Psoas muscle (tissue), 8 donors: ENCODE measurements at regions of chr18 and their contacts with region 1.

Region 1: DNA sequence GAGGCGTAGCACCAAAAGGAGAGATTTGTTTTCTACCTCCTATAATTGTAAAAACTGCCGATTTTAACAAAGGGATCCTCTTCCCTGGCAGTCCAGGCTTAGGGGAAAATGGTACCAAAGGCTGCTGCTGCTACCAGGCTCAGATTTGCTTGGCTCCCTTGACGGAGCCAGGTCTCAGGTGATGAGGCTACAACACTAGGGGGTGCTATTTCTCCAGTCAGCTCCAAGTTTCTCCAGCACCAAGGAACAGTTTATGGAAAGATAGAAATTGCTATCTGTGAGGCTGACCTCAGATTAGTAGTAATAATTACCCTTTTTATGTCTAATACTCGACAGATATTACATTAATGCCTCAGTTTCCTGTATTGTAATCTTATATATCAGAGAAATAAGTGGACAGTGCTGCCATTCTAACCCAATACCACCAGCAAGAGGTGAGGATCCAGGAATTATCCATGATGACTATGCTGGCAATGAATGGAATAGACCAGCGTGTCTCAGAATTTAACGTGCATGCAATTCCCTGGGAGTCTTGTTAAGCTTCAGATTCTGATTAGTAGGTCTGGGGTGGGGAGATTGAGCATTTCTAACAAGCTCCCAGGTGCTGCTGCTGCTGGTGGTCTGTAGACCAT is 111.3 kb downstream of the ESCO1 start:
- DNase-seq: no peak
- ATAC-seq: peak; percentile 48 to 78 (median 69)
- H3K4me3 ChIP-seq: no peak overlapping the region
- H3K27ac ChIP-seq: peak overlapping the region; percentile 89
- H3K4me1 ChIP-seq: peaks cover 20% of the 10 kb centered on the region
- H3K27me3 ChIP-seq: no peaks in the 10 kb centered on the region
- CTCF ChIP-seq: peak; percentile 74

Region 2: DNA sequence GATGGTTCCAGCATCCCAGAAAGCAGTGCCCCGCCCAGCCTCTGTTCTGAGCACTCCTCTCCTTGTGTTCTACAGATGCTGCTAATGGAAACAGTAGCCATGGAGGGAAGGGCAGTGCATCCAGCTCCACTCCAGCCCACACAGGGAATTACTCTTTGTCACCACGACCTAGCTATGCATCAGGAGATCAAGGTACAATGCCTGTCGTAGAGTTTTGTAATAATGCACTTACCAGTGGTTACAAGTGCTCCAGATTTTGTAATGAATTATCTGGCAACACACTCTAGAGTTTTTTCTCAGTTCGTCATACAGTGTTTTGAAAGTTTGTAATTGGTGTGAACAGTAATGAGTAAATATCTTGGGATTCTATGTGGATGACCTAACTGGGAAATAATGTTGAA is 49.8 kb before region 1 on chr18:
- intact Hi-C with region 1: no loop called
- DNase-seq: no peak
- ATAC-seq: peak in 2 of 4 donors; percentile 32 to 39
- H3K4me3 ChIP-seq: no peak overlapping the region
- H3K27ac ChIP-seq: no peak overlapping the region
- H3K4me1 ChIP-seq: peaks cover 39% of the 10 kb centered on the region
- H3K27me3 ChIP-seq: no peaks in the 10 kb centered on the region
- CTCF ChIP-seq: no peak

Region 3: GRCh38 chr18:21452796-21453510 is 36.3 kb before region 1 on chr18:
- intact Hi-C with region 1: loop called in 1 of 2 experiments (anchors 2 kb)
- DNase-seq: no peak
- ATAC-seq: peak in 1 of 4 donors; percentile 21
- H3K4me3 ChIP-seq: peak overlapping the region; percentile 23
- H3K27ac ChIP-seq: peak overlapping the region; percentile 85
- H3K4me1 ChIP-seq: peaks cover 51% of the 10 kb centered on the region
- H3K27me3 ChIP-seq: no peaks in the 10 kb centered on the region
- CTCF ChIP-seq: no peak

Region 4: DNA sequence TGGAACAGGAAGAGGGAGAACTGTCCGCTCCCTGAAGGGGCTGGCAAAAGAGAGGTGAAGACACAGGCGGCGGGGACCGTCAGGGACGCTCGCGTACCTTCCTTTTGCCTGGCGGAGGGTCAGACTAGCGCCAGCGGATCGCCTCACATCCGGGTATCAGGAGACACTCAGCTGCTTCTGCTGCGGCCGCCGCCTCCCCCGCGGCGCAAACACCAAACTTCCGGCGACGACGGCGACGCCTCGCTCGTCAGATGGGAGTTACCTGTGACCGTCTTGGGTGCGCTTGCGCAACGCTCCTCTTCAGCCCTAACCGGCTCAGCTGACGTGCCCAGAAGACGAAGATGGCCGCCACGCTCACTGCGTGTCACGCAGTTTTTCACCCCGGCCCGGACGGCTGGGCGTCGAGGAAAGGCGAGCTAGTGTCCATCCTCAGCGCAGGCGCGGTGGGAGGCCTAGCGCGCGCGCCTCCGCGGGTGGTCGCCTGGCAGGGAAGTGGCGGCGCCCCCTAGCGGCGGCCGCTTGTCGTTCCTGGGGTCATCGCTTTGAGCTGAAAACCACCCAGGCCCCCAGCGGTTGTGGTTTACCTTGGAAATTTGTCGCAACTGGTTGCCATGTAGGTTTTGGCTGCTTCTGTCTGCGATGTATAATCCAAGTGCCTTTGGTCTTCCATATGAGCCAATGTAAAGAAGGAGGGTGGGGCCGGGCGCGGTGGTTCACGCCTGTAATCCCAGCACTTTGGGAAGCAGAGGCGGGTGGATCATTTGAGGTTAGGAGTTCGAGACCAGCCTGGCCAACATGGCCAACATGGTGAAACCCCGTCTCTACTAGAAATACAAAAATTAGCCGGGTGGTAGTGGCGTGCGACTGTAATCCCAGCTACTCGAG is 111.5 kb after region 1 on chr18 and contains the start of gene ESCO1:
- intact Hi-C with region 1: loop called in 1 of 2 experiments (anchors 10 kb)
- DNase-seq: peak; percentile 96 to 98
- ATAC-seq: peak; percentile 90 to 94 (median 92)
- H3K4me3 ChIP-seq: peak within 1 kb of the TSS; percentile 90
- H3K27ac ChIP-seq: peak within 1 kb of the TSS; percentile 99
- H3K4me1 ChIP-seq: peaks cover 7% of the 10 kb centered on the region
- H3K27me3 ChIP-seq: no peaks in the 10 kb centered on the region
- CTCF ChIP-seq: peak; percentile 95
- total RNA-seq, gene ESCO1: 10.3 to 19.3 (median 15.7) TPM

Region 5: DNA sequence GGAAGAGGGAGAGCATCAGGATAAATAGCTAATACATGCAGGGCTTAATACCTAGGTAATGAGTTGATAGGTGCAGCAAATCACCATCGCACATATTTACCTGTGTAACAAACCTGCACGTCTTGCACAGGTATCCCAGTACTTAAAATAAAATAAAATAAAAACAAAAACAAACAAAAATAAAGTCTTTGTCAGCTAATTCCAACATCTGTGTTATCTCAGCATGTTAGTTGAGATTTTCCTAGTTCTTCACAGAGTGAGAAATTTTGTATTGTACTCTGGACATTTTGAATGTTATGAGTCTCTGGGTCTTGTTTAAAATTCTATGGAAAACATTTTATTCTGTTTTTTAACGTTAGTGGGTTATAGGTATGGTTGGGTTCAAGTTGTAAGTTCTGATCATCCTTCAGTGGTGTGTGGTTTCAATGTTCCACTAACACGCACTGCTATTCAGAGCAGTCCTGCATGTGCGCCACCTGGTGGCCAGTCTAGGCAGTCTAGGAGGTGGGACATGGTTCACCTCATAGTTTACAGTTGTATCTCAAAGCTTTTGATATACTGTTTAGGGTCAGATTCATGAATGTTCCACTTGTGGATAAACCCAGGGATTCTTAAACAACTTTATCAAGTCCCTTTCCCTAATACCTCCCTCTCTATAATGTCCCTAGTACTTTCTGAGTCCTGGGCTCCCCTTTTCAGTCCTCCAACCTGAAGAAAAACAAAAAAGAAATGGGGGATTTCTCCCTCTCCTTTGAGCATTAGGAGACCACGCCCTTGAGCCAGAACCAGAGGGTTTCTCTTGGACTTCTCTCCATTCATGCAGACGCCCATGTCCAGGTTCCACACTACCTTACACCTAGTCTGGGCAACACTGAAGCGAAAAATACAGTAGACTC is 466.8 kb after region 1 on chr18:
- intact Hi-C with region 1: loop called in 1 of 2 experiments (anchors 10 kb)
- DNase-seq: peak; percentile 74 to 82
- ATAC-seq: peak; percentile 69 to 80 (median 75)
- H3K4me3 ChIP-seq: no peak overlapping the region
- H3K27ac ChIP-seq: no peak overlapping the region
- H3K4me1 ChIP-seq: no peaks in the 10 kb centered on the region
- H3K27me3 ChIP-seq: peaks cover 0 to 2% (median 0%) of the 10 kb centered on the region in 3 donors
- CTCF ChIP-seq: peak; percentile 86

Region 6: GRCh38 chr18:22132258-22132657 is 643.0 kb after region 1 on chr18:
- intact Hi-C with region 1: no loop called
- DNase-seq: no peak
- ATAC-seq: no peak
- H3K4me3 ChIP-seq: no peak overlapping the region
- H3K27ac ChIP-seq: no peak overlapping the region
- H3K4me1 ChIP-seq: no peaks in the 10 kb centered on the region
- H3K27me3 ChIP-seq: peaks cover 0 to 8% (median 0%) of the 10 kb centered on the region in 3 donors
- CTCF ChIP-seq: no peak